Left colon (tissue), 2 donors: ENCODE measurements at regions of chr1 and their contacts with region 1.

Region 1: GRCh38 chr1:69191335-69191734 is 376.4 kb upstream of the LRRC7 start:
- DNase-seq: no peak
- ATAC-seq: no peak

Region 2: GRCh38 chr1:69459244-69459643 is 267.9 kb after region 1 on chr1:
- intact Hi-C with region 1: loop called in 1 of 2 experiments (anchors 5 kb)
- DNase-seq: no peak
- ATAC-seq: no peak